ENCODE measurements at regions of chr15 and their contacts with region 1.

Region 1: GRCh38 chr15:64740311-64741170 is 34.8 kb downstream of the RBPMS2 start:
- DNase-seq: peak; percentile 74
- H3K4me3 ChIP-seq: peak overlapping the region in 1 of 4 donors; percentile 18
- H3K27ac ChIP-seq: peak overlapping the region; percentile 81 to 93 (median 88)
- H3K4me1 ChIP-seq: peaks cover 10 to 36% (median 25%) of the 10 kb centered on the region in 4 donors
- H3K27me3 ChIP-seq: no peaks in the 10 kb centered on the region
- CTCF ChIP-seq: peak in 3 of 5 experiments; percentile 7 to 14 (median 9)
- EP300 ChIP-seq: peak; percentile 16
- POLR2A ChIP-seq: no peak

Region 2: GRCh38 chr15:64775551-64776401 is 35.2 kb after region 1 on chr15 and contains the start of gene RBPMS2:
- in situ Hi-C with region 1: no loop called
- intact Hi-C with region 1: loop called (anchors 2 kb)
- DNase-seq: no peak
- H3K4me3 ChIP-seq: peak within 1 kb of the TSS; percentile 48 to 73 (median 62)
- H3K27ac ChIP-seq: peak within 1 kb of the TSS; percentile 86 to 93 (median 90)
- H3K4me1 ChIP-seq: peaks cover 0 to 8% (median 1%) of the 10 kb centered on the region in 4 donors
- H3K27me3 ChIP-seq: peaks cover 42% of the 10 kb centered on the region
- CTCF ChIP-seq: no peak
- EP300 ChIP-seq: no peak
- POLR2A ChIP-seq: no peak
- total RNA-seq, gene RBPMS2: 4.4 to 27.7 (median 11.5) TPM

Region 3: GRCh38 chr15:64809649-64810496 is 69.3 kb after region 1 on chr15:
- in situ Hi-C with region 1: loop called in 3 of 4 experiments (anchors 10 kb)
- intact Hi-C with region 1: loop called (anchors 2 kb)
- DNase-seq: peak; percentile 83
- H3K4me3 ChIP-seq: no peak overlapping the region
- H3K27ac ChIP-seq: peak overlapping the region; percentile 68 to 90 (median 74)
- H3K4me1 ChIP-seq: peaks cover 0 to 12% (median 6%) of the 10 kb centered on the region in 4 donors
- H3K27me3 ChIP-seq: no peaks in the 10 kb centered on the region
- CTCF ChIP-seq: peak; percentile 85 to 94 (median 92)
- EP300 ChIP-seq: no peak
- POLR2A ChIP-seq: no peak